ENCODE measurements at regions of chr7 and their contacts with region 1.

Region 1: GRCh38 chr7:24715661-24716479 is 41.4 kb downstream of the GSDME start:
- DNase-seq: no peak
- H3K4me3 Mint-ChIP-seq: no peak overlapping the region
- H3K27ac Mint-ChIP-seq: no peak overlapping the region
- H3K4me1 Mint-ChIP-seq: peaks cover 7% of the 10 kb centered on the region
- H3K27me3 Mint-ChIP-seq: peaks cover 15% of the 10 kb centered on the region

Region 2: DNA sequence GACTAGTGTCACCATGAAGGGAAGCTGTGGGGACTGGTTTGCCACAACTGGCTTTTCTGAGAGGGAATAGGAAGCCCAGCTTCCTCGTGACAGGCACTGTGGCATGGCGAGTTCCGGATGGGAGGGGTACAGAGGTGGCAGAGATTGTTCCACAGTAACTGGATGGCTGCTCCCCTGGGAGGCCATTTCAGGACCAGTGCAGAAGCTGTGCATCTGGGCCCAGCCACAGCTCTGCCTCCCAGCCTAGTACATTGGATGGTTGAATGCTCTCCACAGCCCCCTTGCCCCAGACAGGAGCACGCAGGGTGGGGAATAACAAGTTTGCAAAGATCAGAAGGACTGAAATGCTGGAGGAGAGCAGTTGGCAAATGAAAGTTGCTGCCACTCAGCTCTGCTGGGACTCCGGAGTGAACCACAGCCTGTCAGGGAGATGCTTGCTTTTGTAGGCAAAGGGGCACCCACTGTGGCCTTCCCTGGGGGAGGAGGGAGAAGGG is 10.4 kb before region 1 on chr7:
- CTCF ChIA-PET with region 1: interaction called, 11 read pairs
- DNase-seq: no peak
- H3K4me3 Mint-ChIP-seq: no peak overlapping the region
- H3K27ac Mint-ChIP-seq: no peak overlapping the region
- H3K4me1 Mint-ChIP-seq: peaks cover 8% of the 10 kb centered on the region
- H3K27me3 Mint-ChIP-seq: no peaks in the 10 kb centered on the region

Region 3: DNA sequence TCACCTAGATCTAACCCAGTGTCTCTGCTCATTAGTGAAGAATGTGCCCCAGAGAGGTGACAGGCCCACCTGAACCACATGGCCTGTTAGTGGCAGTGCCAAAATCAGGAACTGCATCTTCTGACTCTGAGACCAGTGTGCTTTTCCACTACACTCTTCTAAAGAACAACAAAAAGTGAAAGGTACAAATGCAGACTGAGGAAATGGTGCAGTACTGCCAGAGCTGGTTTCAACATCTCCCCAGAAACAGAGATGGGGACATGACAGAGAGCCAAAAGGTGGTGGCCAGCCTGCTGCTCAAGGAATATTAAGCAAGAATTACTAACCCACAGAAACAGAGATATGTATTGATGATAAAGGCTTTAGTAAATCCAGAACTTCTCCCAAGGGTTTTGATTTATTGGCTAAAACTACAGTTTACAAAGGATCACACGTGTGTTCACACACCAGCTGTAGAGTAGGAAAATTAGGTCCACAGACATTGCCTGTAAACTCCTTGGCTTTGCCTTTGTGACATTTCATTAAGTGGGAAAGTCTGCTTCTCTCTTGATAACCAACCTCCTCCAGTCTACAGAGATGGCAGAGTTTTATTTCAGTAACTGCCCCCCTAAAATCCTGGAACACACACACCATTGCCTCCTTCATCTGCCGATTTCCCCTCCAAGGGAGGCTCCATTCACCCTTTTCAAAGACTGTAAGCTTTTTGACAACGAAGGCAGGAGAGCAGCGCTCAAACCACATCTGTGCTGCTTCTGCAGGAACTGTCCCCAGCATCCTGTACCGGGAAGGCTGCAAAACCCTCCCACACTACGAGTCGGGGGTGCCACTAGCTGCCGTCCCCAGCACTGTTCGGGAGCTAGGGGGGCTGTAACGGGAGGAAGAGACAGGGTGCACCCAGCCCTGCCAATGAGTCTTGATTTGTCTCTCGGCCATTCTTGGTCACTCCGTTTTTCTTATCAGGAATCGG is 11.6 kb after region 1 on chr7:
- CTCF ChIA-PET with region 1: interaction called, 10 read pairs
- DNase-seq: no peak
- H3K4me3 Mint-ChIP-seq: no peak overlapping the region
- H3K27ac Mint-ChIP-seq: no peak overlapping the region
- H3K4me1 Mint-ChIP-seq: peaks cover 23% of the 10 kb centered on the region
- H3K27me3 Mint-ChIP-seq: peaks cover 22% of the 10 kb centered on the region

Region 4: DNA sequence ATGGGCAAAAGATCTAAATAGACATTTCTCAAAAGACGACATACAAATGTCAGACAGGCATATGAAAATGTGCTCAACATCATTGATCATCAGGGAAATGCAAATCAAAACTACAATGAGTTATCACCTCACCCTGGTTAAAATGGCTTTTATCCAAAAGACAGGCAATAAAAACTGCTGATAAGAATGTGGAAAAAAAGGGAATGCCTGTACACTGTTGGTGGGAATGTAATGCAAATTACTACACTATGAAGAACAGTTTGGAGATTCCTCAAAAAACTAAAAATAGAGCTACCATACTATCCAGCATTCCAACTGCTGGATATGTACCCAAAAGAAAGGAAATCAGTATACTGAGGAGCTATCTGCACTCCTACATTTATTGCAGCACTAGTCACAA is 23.4 kb after region 1 on chr7:
- CTCF ChIA-PET with region 1: no interaction called
- DNase-seq: no peak
- H3K4me3 Mint-ChIP-seq: no peak overlapping the region
- H3K27ac Mint-ChIP-seq: no peak overlapping the region
- H3K4me1 Mint-ChIP-seq: no peaks in the 10 kb centered on the region
- H3K27me3 Mint-ChIP-seq: peaks cover 9% of the 10 kb centered on the region

Region 5: GRCh38 chr7:24877790-24878311 is 162.0 kb after region 1 on chr7:
- CTCF ChIA-PET with region 1: no interaction called
- DNase-seq: peak; percentile 36
- H3K4me3 Mint-ChIP-seq: peak overlapping the region; percentile 19
- H3K27ac Mint-ChIP-seq: peak overlapping the region; percentile 51
- H3K4me1 Mint-ChIP-seq: peaks cover 26% of the 10 kb centered on the region
- H3K27me3 Mint-ChIP-seq: no peaks in the 10 kb centered on the region

Region 6: DNA sequence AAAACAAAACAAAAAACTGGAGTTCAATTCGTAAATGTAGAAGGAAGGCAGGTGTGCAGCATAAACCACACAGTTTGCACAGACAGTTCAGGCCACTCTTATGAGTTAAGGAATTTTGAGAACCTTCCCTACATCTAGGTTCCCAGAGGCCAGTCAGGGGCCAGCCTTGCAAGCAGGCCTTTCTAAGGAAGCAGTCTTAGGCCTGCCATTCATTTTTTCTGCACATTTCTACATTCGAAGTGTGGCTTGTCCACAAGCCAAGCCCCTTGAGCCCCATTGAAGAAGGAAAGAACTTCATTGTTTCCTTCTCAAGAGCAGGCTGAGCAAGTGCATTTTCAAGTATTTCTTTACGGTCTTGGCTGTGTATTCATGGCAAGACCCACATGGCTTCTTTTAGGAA is 275.5 kb after region 1 on chr7:
- CTCF ChIA-PET with region 1: no interaction called
- DNase-seq: no peak
- H3K4me3 Mint-ChIP-seq: no peak overlapping the region
- H3K27ac Mint-ChIP-seq: no peak overlapping the region
- H3K4me1 Mint-ChIP-seq: peaks cover 6% of the 10 kb centered on the region
- H3K27me3 Mint-ChIP-seq: peaks cover 30% of the 10 kb centered on the region

Measured in activated naive CD4-positive, alpha-beta T cell treated with anti-CD3 and anti-CD28 coated beads, Interleukin-2, amount 10 ng/mL, durations not matched to agents 7 days and 5 days (primary cell).